Activated CD4-positive, alpha-beta memory T cell treated with anti-CD3 and anti-CD28 coated beads for 36 hours (primary cell): ENCODE measurements at regions of chr19 and their contacts with region 1.

Region 1: GRCh38 chr19:7562646-7563393 is 27.3 kb downstream of the PNPLA6 start:
- DNase-seq: no peak
- H3K4me3 Mint-ChIP-seq: no peak overlapping the region
- H3K27ac Mint-ChIP-seq: no peak overlapping the region
- H3K4me1 Mint-ChIP-seq: no peaks in the 10 kb centered on the region
- H3K27me3 Mint-ChIP-seq: no peaks in the 10 kb centered on the region

Region 2: DNA sequence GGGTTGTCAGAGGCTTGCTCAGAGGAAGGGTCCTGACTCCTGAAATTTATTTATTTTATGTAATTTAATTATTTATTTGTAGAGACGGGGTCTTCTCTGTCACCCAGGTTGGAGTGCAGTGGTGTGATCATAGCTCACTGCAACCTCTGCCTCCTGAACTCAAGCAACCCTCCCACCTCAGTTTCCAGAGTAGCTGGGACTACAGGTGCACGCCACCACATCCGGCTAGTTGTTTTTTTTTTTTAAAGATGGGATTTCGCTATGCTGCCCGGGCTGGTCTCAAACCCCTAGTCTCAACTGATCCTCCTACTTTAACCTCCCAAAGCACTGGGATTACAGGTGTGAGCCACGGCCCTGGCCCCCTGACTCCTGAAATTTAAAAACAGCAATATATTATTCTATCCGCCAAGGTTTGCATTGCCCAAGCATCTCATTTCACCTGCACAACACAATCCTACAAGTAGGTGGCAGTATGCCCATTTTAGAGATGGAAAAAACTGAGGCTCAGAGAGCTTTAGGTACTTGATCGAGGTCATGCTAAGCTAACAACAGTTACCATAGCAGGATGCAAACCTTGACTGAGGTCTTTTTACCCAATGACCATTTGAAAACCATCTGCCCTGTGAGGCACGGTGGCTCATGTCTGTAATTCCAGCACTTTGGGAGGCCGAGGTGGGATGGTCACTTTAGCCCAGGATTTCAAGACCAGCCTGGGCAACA is 196.0 kb before region 1 on chr19:
- CTCF ChIA-PET with region 1: interaction called, 16 read pairs
- POLR2A ChIA-PET with region 1: no interaction called
- intact Hi-C with region 1: no loop called
- DNase-seq: peak; percentile 35
- H3K4me3 Mint-ChIP-seq: no peak overlapping the region
- H3K27ac Mint-ChIP-seq: peak overlapping the region; percentile 13
- H3K4me1 Mint-ChIP-seq: peaks cover 6% of the 10 kb centered on the region
- H3K27me3 Mint-ChIP-seq: no peaks in the 10 kb centered on the region

Region 3: GRCh38 chr19:7550987-7551761 is 11.6 kb before region 1 on chr19:
- CTCF ChIA-PET with region 1: interaction called, 13 read pairs
- POLR2A ChIA-PET with region 1: no interaction called
- intact Hi-C with region 1: no loop called
- DNase-seq: peak; percentile 50
- H3K4me3 Mint-ChIP-seq: no peak overlapping the region
- H3K27ac Mint-ChIP-seq: no peak overlapping the region
- H3K4me1 Mint-ChIP-seq: peaks cover 5% of the 10 kb centered on the region
- H3K27me3 Mint-ChIP-seq: no peaks in the 10 kb centered on the region

Region 4: DNA sequence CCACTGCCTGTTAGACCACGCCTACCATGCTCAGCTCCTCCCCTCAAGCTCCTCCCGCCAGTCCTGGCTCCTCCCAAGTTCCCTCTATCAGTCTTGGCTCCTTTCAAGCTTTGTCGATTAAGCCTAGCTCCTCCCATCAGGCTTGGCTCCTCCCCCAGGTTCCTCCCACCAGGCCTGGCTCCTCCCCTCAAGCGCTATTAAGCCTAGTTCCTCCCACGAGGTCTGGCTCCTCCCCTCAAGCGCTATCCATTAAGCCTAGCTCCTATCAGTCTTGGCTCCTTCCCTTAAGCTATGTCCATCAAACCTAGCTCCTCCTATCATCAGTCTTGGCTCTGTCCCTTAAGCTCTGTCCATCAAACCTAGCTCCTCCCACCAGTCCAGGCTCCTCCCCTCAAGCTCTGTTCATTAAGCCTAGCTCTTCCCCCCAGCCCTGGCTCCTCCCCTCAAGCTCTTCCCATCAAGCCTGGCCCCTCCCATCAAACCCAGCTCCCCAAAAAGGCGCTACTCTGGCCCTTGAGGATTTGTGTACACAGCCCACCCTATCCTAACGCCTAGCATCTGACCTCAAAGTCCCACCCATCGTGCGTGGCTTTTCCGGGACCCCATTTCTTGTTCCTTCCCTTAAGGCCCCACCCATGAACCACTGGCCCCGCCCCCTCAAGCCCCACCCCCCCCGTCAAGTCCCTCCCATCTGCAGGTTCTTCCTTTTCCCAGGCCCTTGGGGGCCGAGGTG is 42.8 kb after region 1 on chr19:
- CTCF ChIA-PET with region 1: interaction called, 18 read pairs
- POLR2A ChIA-PET with region 1: no interaction called
- intact Hi-C with region 1: no loop called
- DNase-seq: peak; percentile 49
- H3K4me3 Mint-ChIP-seq: no peak overlapping the region
- H3K27ac Mint-ChIP-seq: no peak overlapping the region
- H3K4me1 Mint-ChIP-seq: no peaks in the 10 kb centered on the region
- H3K27me3 Mint-ChIP-seq: peaks cover 12% of the 10 kb centered on the region

Region 5: DNA sequence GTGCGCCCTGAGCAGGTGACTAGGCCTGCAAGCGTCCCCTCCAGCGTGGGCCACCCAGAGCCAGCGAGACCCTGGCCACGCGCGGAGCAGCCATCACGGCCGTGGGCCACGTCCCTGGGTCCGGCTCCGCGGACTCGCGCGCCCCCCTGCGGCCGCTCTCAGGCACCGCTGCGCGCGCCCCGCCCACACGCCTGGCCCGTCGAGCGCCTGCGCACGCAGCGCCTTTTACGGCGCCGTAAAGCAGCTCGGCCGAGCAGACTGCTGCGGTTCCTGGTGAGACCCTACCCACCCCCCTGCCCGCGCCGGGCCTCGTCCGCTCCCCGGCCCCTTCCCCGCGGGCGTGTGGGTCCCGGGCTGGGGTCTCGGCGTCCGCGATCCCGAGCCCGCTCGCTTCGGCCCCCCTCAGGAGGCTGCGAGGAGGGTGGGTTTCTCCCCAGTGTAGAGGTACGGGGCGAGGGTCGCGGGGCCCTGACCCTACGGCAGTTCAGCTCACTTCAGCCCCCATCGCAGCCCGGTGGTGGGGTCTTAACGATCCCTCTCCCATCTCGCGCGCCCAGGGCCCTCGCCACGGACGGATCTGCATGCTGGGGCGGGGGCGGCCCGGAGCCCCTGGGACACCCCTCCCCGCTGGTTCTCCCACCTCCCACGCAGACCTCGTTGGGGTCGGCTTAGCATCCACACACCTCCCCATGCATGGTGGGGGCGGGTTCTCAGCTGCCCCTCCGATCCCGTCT is 118.0 kb after region 1 on chr19 and contains the start of gene TRAPPC5:
- CTCF ChIA-PET with region 1: interaction called, 52 read pairs
- POLR2A ChIA-PET with region 1: interaction called, 4 read pairs
- intact Hi-C with region 1: loop called (anchors 1 kb)
- DNase-seq: peak; percentile 91
- H3K4me3 Mint-ChIP-seq: peak within 1 kb of the TSS; percentile 88
- H3K27ac Mint-ChIP-seq: peak within 1 kb of the TSS; percentile 91
- H3K4me1 Mint-ChIP-seq: peaks cover 44% of the 10 kb centered on the region
- H3K27me3 Mint-ChIP-seq: peaks cover 23% of the 10 kb centered on the region
- total RNA-seq, gene TRAPPC5: 77.5 to 88.2 TPM

Region 6: DNA sequence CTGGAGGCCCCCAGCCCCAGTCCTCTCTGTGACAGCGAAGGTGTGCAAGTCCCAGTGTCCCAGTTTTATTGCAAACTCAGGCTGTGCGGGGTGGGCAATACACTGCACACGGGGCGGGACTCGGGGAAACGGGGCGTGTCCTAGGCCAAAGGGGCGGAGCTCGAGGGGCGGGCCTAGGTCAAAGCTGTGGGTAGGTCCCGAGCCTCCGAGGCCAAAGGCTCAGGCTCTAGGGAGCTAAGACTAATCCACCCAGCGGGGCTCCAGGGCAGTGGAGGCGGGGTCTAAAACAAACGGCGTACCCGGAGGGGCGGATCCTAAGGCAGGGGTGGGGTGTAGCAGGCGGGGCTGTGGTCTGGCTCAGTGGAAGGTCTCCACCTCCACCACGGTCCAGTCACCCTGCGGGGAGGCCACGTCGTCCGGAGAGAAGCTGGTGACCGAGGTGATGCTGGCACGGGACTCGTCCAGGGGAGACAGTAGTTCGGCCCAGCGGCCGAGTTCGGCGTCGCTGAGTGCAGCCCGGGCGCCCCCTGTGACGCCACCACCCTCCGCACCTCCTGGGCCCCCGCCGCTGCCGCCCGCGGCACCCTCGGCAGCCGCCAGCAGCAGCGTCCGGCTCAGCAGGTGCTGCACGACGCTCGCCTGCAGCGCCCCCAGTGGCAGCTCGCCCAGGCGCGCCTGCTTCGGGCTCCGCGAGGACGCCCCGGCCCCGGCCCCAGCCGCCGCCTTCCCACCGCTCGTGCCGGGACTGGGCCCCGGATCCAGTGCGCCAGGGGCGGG is 306.0 kb after region 1 on chr19:
- CTCF ChIA-PET with region 1: interaction called, 21 read pairs
- POLR2A ChIA-PET with region 1: no interaction called
- intact Hi-C with region 1: no loop called
- DNase-seq: peak; percentile 86
- H3K4me3 Mint-ChIP-seq: peak overlapping the region; percentile 73
- H3K27ac Mint-ChIP-seq: no peak overlapping the region
- H3K4me1 Mint-ChIP-seq: peaks cover 42% of the 10 kb centered on the region
- H3K27me3 Mint-ChIP-seq: peaks cover 29% of the 10 kb centered on the region